Common myeloid progenitor, CD34-positive (primary cell): ENCODE measurements at regions of chr6 and their contacts with region 1.

Region 1: GRCh38 chr6:36360241-36361054 is 23.8 kb upstream of the BNIP5 start:
- DNase-seq: peak; percentile 67 to 79 (median 77)
- H3K4me3 ChIP-seq: no peak overlapping the region
- H3K27ac ChIP-seq: no peak overlapping the region
- H3K4me1 ChIP-seq: peaks cover 0 to 22% (median 13%) of the 10 kb centered on the region in 4 experiments
- H3K27me3 ChIP-seq: no peaks in the 10 kb centered on the region

Region 2: GRCh38 chr6:36123257-36124139 is 236.9 kb before region 1 on chr6:
- CTCF ChIA-PET with region 1: interaction called, 21 read pairs
- POLR2A ChIA-PET with region 1: no interaction called
- DNase-seq: peak; percentile 85 to 91 (median 88)
- H3K4me3 ChIP-seq: no peak overlapping the region
- H3K27ac ChIP-seq: no peak overlapping the region
- H3K4me1 ChIP-seq: peaks cover 19 to 34% (median 24%) of the 10 kb centered on the region in 4 experiments
- H3K27me3 ChIP-seq: peaks cover 0 to 19% (median 2%) of the 10 kb centered on the region in 5 experiments

Region 3: GRCh38 chr6:36302227-36302976 is 58.0 kb before region 1 on chr6:
- CTCF ChIA-PET with region 1: interaction called, 99 read pairs
- POLR2A ChIA-PET with region 1: no interaction called
- DNase-seq: peak; percentile 94 to 97 (median 97)
- H3K4me3 ChIP-seq: no peak overlapping the region
- H3K27ac ChIP-seq: no peak overlapping the region
- H3K4me1 ChIP-seq: peaks cover 0 to 10% (median 5%) of the 10 kb centered on the region in 4 experiments
- H3K27me3 ChIP-seq: no peaks in the 10 kb centered on the region

Region 4: GRCh38 chr6:36340618-36341454 is 19.6 kb before region 1 on chr6:
- CTCF ChIA-PET with region 1: interaction called, 24 read pairs
- POLR2A ChIA-PET with region 1: no interaction called
- DNase-seq: peak; percentile 70 to 82 (median 79)
- H3K4me3 ChIP-seq: peak overlapping the region in 3 of 7 experiments; percentile 6 to 43 (median 20)
- H3K27ac ChIP-seq: no peak overlapping the region
- H3K4me1 ChIP-seq: peaks cover 0 to 3% (median 0%) of the 10 kb centered on the region in 4 experiments
- H3K27me3 ChIP-seq: peaks cover 0 to 11% (median 5%) of the 10 kb centered on the region in 5 experiments

Region 5: GRCh38 chr6:36349240-36349639 is 11.2 kb before region 1 on chr6:
- CTCF ChIA-PET with region 1: interaction called, 12 read pairs
- POLR2A ChIA-PET with region 1: interaction called, 3 read pairs
- DNase-seq: peak; percentile 48 to 83 (median 73)
- H3K4me3 ChIP-seq: no peak overlapping the region
- H3K27ac ChIP-seq: no peak overlapping the region
- H3K4me1 ChIP-seq: peaks cover 8 to 25% (median 14%) of the 10 kb centered on the region in 4 experiments
- H3K27me3 ChIP-seq: no peaks in the 10 kb centered on the region

Region 6: DNA sequence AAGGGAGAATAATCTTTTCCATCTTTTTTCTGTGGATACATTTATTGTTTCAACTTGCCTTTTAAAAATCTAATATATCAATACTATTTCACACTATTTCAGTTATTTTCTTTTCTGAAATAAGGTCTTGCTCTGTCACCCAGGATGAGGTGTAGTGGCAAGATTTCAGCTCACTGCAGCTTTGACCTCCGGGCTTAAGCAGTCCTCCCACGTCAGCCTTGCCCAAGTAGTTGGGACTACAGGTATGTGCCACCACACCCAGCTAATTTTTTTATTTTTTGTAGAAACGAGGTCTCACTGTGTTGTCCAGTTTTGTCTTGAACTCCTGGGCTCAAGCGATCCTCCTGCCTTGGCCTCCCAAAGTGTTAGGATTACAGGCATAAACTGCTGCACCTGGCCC is 90.9 kb after region 1 on chr6:
- CTCF ChIA-PET with region 1: no interaction called
- POLR2A ChIA-PET with region 1: no interaction called
- DNase-seq: no peak
- H3K4me3 ChIP-seq: no peak overlapping the region
- H3K27ac ChIP-seq: peak overlapping the region in 1 of 2 experiments; percentile 25
- H3K4me1 ChIP-seq: peaks cover 0 to 3% (median 0%) of the 10 kb centered on the region in 4 experiments
- H3K27me3 ChIP-seq: no peaks in the 10 kb centered on the region

Region 7: GRCh38 chr6:36526066-36526465 is 165.6 kb after region 1 on chr6:
- CTCF ChIA-PET with region 1: no interaction called
- POLR2A ChIA-PET with region 1: no interaction called
- DNase-seq: peak; percentile 62 to 80 (median 69)
- H3K4me3 ChIP-seq: peak overlapping the region in 1 of 7 experiments; percentile 13
- H3K27ac ChIP-seq: no peak overlapping the region
- H3K4me1 ChIP-seq: peaks cover 0 to 25% (median 13%) of the 10 kb centered on the region in 4 experiments
- H3K27me3 ChIP-seq: no peaks in the 10 kb centered on the region